ENCODE measurements at regions of chr5 and their contacts with region 1.

Region 1: GRCh38 chr5:146130440-146131045 is 25.2 kb upstream of the PLAC8L1 start:
- ATAC-seq: no peak
- H3K4me3 ChIP-seq: no peak overlapping the region
- H3K27ac ChIP-seq: no peak overlapping the region
- H3K4me1 ChIP-seq: no peaks in the 10 kb centered on the region

Region 2: GRCh38 chr5:146041180-146041789 is 89.3 kb before region 1 on chr5:
- in situ Hi-C with region 1: no loop called
- ATAC-seq: peak in 3 of 8 experiments; percentile 12 to 59 (median 43)
- H3K4me3 ChIP-seq: no peak overlapping the region
- H3K27ac ChIP-seq: no peak overlapping the region
- H3K4me1 ChIP-seq: no peaks in the 10 kb centered on the region

Region 3: DNA sequence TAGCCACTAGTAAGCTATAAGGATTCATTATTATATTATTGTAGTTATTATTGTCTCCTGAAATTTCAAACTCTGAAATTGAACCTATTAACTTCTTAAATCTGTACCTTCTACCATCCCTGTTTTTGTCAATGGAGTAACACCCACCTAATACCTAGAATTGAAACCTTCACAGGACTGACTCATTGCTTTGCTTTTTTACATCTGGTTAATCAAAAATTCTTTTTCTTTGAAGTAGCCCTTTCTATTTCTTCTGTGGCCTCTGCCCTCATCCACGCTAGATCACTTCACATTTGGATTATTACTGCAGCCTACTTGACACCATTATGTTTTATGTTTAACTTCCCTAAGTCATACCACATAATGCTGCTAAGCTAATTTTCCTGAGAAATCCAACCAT is 108.4 kb after region 1 on chr5:
- in situ Hi-C with region 1: loop called in 1 of 9 experiments (anchors 25 kb)
- ATAC-seq: no peak
- H3K4me3 ChIP-seq: no peak overlapping the region
- H3K27ac ChIP-seq: no peak overlapping the region
- H3K4me1 ChIP-seq: no peaks in the 10 kb centered on the region